ENCODE measurements at regions of chr1 and their contacts with region 1.

Region 1: GRCh38 chr1:6489799-6490180 is 1.7 kb downstream of the PLEKHG5 start:
- DNase-seq: peak; percentile 83
- ATAC-seq: peak; percentile 53

Region 2: DNA sequence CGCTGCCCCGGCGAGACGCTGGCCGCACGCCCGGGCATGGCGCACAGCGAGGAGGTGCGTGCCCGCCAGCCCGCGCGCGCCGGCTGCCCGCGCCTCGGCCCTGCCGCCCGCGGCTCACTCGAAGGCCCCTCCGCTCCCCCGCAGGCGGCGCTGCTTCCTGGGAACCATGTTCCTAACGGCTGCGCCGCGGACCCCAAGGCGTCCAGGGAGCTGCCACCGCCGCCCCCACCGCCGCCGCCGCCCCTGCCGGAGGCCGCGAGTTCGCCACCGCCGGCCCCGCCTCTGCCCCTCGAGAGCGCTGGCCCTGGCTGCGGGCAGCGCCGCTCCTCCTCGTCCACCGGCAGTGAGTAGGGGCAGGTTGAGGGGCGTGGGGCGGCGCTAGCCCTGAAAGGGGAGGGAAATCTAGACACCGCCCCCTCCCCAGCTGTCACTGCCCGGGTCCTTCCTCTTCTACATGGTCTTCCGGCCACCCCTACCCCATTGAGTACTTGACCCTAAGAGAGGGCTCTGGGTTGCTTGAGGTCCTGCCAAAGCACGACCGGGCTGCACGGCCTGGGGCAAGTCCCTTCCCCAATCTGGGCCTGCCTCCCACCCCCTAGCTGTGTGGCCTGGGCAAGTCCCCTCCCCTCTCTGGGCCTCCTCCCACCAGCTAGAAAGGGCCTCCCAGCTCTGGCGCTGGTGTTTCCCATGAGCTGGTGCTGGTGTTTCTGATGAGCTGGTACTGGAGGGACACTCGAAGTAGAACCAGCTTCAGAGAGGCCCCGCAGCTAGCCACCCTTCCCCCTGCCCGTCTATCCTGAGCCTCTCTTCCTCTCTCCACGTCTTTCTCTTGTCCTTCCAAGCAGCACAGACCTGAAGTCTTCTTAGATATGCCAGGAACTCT is 40.8 kb before region 1 on chr1:
- intact Hi-C with region 1: no loop called
- DNase-seq: no peak
- ATAC-seq: peak; percentile 53

Region 3: DNA sequence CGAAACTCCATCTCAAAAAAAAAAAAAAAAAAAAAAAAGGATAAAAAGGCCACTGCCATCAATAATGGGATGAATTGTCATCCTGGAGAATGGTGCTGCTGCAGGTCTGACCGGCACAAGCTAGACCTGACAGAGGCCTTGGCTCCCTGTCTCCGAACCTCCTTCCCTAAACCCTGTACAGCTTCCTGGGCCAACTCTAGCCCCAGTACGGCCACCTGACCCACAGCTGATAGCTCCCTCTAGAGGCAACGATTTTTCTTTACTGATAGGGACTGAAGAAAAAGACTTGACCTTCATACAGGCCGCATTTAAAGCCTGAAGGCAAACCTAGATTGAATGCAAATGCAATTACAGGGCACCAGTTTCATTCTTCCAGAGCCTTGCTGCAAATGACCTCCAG is 33.8 kb after region 1 on chr1:
- intact Hi-C with region 1: loop called (anchors 2 kb)
- DNase-seq: no peak
- ATAC-seq: peak; percentile 63

Region 4: GRCh38 chr1:6646499-6647148 is 156.8 kb after region 1 on chr1:
- intact Hi-C with region 1: loop called (anchors 5 kb)
- DNase-seq: no peak
- ATAC-seq: peak; percentile 32